ENCODE measurements at regions of chr1 and their contacts with region 1.

Region 1: DNA sequence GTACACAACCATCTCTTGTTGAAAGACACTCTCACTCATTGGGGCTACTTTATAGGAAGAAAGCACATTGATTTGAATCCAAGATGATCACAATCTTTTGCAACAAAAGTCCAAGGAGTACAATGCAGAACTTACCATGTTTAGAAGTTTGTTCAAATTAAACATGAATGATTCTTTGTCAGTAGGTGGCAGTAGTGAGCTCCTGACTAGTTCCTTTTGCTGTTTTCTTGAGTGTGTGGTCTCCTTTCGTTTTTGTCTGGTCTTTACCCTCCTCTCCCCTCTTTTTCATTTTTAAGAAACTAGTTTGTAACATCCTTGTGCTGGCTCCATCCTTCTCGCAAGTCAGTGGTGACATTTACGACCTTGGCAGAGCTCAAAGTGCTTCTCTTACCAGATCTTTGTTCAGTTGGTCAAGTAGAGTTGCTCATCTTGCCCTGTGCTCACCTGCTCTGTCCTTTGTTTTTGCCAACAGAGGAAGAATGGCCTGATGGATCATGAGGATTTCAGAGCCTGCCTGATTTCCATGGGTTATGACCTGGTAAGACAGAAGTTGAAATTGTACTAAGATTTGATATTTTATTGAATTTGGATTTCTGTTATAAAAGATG is 35.7 kb upstream of the MTR start:
- DNase-seq: peak; percentile 68

Region 2: DNA sequence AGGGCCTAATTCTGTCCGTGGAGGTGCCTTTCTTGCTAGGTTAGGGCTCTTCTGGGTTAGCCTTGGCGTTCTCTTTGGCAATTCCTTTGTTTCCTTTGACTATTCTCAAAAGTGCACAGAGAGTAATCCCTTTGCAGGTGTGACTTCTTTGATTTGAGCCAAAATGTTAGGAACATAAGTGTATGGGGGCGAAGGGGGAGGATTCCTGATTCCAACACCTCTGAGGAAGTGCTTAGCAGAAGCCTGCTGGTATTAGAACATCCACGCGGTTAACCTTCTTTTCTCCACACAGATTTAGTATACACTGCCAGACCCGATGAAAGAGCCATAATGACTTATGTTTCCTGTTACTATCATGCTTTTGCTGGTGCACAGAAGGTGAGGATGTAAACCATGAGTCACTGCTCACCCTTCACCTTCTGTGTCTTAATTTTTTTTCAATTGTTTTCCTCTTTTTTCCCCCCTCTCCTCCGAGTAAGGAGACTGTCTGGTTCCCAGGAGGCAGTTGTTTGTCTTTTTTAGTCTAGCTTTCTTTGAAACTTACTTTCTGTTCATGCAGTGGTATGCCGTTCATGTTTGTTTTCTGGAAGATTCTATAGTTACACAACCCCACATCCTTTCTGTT is 25.1 kb before region 1 on chr1:
- CTCF ChIA-PET with region 1: no interaction called
- POLR2A ChIA-PET with region 1: no interaction called
- DNase-seq: no peak

Region 3: DNA sequence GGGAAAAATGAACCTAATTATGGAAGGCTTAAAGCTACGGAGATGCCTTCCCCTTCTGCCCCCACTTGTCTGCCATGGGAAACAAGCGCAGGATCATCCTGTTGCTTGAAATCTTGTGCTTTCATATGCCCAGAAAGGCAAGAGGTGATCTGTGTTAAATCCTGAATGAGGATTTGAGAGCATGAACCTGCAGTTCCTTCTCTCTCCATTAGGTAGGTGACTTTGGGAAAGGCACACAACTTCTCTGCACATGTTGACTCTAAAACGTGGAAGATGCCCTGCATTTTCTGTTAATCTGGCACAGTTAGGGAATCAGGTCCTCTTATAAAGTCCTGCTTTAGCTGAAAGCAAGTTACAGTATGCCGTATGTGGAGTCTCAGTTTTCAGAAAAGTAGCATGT is 10.9 kb before region 1 on chr1:
- CTCF ChIA-PET with region 1: interaction called, 13 read pairs
- POLR2A ChIA-PET with region 1: no interaction called
- DNase-seq: no peak